PC-3 (cell line): ENCODE measurements at regions of chr6 and their contacts with region 1.

Region 1: GRCh38 chr6:3929281-3929798 is 80.2 kb downstream of the FAM50B start:
- DNase-seq: no peak
- ATAC-seq: no peak
- H3K4me3 ChIP-seq: no peak overlapping the region
- H3K27ac ChIP-seq: no peak overlapping the region
- H3K4me1 ChIP-seq: peaks cover 5% of the 10 kb centered on the region; the same call in 1 of the 2 replicates
- H3K27me3 ChIP-seq: no peaks in the 10 kb centered on the region
- CTCF ChIP-seq: no peak

Region 2: GRCh38 chr6:3517350-3517749 is 412.0 kb before region 1 on chr6:
- CTCF ChIA-PET with region 1: no interaction called
- POLR2A ChIA-PET with region 1: no interaction called
- intact Hi-C with region 1: no loop called
- DNase-seq: peak; percentile 80
- ATAC-seq: no peak
- H3K4me3 ChIP-seq: no peak overlapping the region
- H3K27ac ChIP-seq: peak overlapping the region; percentile 73
- H3K4me1 ChIP-seq: peaks cover 21% of the 10 kb centered on the region
- H3K27me3 ChIP-seq: no peaks in the 10 kb centered on the region
- CTCF ChIP-seq: no peak

Region 3: DNA sequence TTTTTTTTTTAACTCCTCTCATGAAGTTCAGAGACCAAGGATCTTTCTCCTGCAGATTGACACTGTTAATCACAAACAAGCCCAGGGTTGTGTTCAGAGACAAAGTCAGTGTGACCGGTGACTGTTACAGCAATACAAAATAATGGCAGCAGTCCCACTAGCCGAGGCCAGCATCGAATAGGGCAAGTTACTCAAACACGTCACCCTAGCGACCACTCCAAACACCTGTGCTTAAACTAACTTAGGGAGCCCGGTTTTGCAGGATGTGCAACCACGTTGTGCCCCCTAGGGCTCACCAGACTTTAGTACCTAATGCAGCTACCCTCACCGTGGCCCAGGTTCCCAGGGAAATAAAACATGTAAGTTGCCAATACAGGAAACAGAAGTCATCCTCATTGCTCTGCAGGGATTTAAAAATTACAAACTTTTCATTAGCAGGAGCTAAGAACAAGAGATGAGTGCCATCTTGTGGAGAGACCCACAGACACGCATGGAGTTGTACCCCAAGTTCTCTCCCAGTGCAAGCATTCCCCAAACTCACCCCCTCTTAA is 42.1 kb before region 1 on chr6:
- CTCF ChIA-PET with region 1: interaction called, 12 read pairs
- POLR2A ChIA-PET with region 1: no interaction called
- intact Hi-C with region 1: loop called (anchors 1 kb)
- DNase-seq: peak; percentile 36
- ATAC-seq: no peak
- H3K4me3 ChIP-seq: no peak overlapping the region
- H3K27ac ChIP-seq: peak overlapping the region; percentile 89
- H3K4me1 ChIP-seq: peaks cover 46% of the 10 kb centered on the region
- H3K27me3 ChIP-seq: no peaks in the 10 kb centered on the region
- CTCF ChIP-seq: peak; percentile 48

Region 4: DNA sequence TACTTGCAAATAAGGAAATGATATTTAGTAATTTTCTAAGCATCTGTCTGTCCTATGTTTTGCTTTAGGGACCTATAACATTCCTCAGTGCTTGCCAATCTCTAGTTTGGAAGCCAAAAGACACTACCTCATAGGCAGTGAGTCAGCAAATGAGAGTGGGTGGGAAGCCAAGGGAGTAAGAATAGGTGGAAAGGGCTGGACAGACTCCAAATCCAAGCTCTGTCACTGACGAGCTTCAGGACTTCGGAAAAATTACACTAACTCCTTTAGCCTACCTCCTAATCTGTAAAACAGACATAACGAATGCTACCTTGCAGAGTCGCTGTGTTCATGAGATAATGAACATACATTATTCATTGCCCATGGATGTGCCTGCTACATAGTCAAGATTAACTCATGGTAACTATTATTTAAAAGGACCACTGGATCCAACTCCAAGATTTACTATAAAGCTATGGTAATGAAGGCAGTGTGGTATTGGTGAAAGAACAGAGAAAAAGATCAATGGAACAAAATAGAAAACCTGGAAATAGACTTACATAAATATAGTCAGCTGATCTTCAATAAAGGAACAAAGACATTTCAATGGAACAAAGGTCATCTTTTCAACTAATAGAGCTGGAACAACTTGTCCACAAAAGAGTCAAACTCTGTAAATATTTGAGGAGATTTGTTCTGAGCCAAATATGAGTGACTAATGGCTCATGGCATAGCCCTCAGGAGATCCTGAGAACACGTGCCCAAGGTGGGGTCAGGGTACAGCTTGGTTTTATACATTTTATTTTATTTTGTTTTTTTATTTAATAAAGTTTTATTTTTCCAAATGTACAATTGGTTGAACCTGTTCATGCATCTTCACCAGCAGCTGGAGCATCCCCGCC is 16.0 kb before region 1 on chr6:
- CTCF ChIA-PET with region 1: interaction called, 18 read pairs
- POLR2A ChIA-PET with region 1: no interaction called
- intact Hi-C with region 1: no loop called
- DNase-seq: peak; percentile 99
- ATAC-seq: peak; percentile 73
- H3K4me3 ChIP-seq: peak overlapping the region; percentile 65
- H3K27ac ChIP-seq: peak overlapping the region; percentile 95
- H3K4me1 ChIP-seq: peaks cover 44% of the 10 kb centered on the region
- H3K27me3 ChIP-seq: no peaks in the 10 kb centered on the region
- CTCF ChIP-seq: no peak

Region 5: DNA sequence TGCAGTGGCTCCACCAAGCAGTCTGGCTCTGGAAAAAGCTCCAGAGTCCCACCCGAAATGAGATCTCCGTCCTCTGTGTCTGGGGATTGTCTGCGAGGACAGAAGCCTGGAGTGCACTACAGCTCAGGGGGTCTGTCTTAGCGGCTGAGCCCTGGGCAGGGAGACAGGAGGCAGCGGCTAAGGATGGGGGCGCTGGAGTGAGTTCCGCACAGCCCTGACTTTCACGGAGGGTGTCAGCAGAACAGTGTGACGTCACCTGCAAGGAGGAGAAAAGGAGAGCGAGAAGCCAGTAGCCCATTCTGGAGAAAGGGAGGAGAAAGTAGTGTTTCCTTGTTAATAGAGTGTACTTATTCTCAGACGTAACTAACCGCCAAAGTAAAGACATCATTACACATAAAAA is 17.4 kb after region 1 on chr6:
- CTCF ChIA-PET with region 1: no interaction called
- POLR2A ChIA-PET with region 1: no interaction called
- intact Hi-C with region 1: no loop called
- DNase-seq: no peak
- ATAC-seq: no peak
- H3K4me3 ChIP-seq: no peak overlapping the region
- H3K27ac ChIP-seq: no peak overlapping the region
- H3K4me1 ChIP-seq: peaks cover 12% of the 10 kb centered on the region
- H3K27me3 ChIP-seq: no peaks in the 10 kb centered on the region
- CTCF ChIP-seq: no peak